ENCODE measurements at regions of chr4 and their contacts with region 1.

Region 1: GRCh38 chr4:23084559-23085248 is 392.0 kb downstream of the GBA3 start:
- DNase-seq: peak; percentile 67
- ATAC-seq: peak; percentile 92
- H3K4me3 ChIP-seq: no peak overlapping the region
- H3K27ac ChIP-seq: peak overlapping the region; percentile 81
- H3K4me1 ChIP-seq: peaks cover 18% of the 10 kb centered on the region
- H3K27me3 ChIP-seq: no peaks in the 10 kb centered on the region
- CTCF ChIP-seq: no peak

Region 2: GRCh38 chr4:22962295-22962694 is 122.4 kb before region 1 on chr4:
- CTCF ChIA-PET with region 1: no interaction called
- POLR2A ChIA-PET with region 1: no interaction called
- intact Hi-C with region 1: loop called (anchors 2 kb)
- DNase-seq: peak; percentile 76
- ATAC-seq: peak; percentile 50
- H3K4me3 ChIP-seq: no peak overlapping the region
- H3K27ac ChIP-seq: no peak overlapping the region
- H3K4me1 ChIP-seq: no peaks in the 10 kb centered on the region
- H3K27me3 ChIP-seq: no peaks in the 10 kb centered on the region
- CTCF ChIP-seq: peak; percentile 79